ENCODE measurements at regions of chrX and their contacts with region 1.

Region 1: GRCh38 chrX:30713061-30713525 is 59.9 kb downstream of the GK start:
- DNase-seq: peak; percentile 65
- H3K4me3 Mint-ChIP-seq: no peak overlapping the region
- H3K27ac Mint-ChIP-seq: no peak overlapping the region
- H3K4me1 Mint-ChIP-seq: no peaks in the 10 kb centered on the region
- H3K27me3 Mint-ChIP-seq: peaks cover 28% of the 10 kb centered on the region
- CTCF ChIP-seq: peak; percentile 66

Region 2: DNA sequence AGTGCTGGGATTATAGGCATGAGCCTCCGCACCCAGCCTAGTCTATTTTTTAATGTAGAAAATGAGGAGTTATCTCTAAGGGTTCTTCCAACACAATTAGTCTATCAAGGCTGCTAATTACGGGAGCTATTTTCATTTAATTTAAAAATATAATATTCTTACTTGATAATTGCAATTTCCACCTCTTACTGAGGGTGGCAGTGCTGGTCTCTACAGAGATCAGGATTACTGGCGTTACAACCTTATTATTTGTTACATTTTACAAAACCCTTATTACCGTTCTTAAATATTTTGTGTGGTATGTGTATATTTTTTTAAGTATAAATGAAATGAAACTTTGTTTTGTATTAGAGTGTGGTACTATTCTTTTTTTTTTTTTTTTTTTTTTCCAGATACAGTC is 77.5 kb before region 1 on chrX:
- CTCF ChIA-PET with region 1: interaction called, 41 read pairs
- POLR2A ChIA-PET with region 1: no interaction called
- intact Hi-C with region 1: loop called (anchors 1 kb)
- DNase-seq: peak; percentile 25
- H3K4me3 Mint-ChIP-seq: no peak overlapping the region
- H3K27ac Mint-ChIP-seq: no peak overlapping the region
- H3K4me1 Mint-ChIP-seq: no peaks in the 10 kb centered on the region
- H3K27me3 Mint-ChIP-seq: no peaks in the 10 kb centered on the region
- CTCF ChIP-seq: peak; percentile 34

Region 3: DNA sequence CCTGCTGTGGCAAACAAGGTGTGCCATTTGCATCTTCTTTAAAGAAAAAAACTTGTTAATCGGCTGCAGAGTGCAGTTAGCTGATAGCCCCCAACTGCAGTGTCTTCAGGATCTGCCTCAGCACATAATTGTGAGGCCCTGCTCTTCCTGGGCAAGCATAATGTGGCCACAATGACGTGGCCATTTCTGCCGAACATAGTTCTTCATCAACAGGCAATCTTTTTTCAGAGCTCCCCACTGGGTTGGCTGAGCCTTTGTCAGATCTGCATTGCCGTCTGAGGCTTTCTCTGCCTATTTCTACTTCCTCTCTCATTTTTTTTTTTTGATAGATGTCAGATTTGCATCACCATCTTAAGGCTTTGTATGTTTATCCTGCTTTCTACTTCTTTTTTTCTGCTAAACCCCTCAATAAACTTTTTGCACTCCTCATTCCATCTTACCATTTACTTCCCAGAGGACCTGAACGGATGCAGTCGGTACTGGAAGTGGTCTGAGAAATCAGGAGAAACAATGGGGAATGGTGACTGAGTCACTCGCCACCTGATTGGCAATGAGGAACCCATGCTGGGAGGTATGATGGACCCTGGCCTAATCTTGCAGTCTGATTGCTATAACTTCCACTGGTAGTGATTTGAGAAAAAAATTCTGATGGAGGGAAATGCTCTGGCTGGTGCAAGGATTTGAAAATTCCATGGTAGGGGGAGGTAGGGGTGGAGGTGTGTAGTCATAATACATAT is 197.2 kb after region 1 on chrX:
- CTCF ChIA-PET with region 1: no interaction called
- POLR2A ChIA-PET with region 1: no interaction called
- intact Hi-C with region 1: no loop called
- DNase-seq: no peak
- H3K4me3 Mint-ChIP-seq: no peak overlapping the region
- H3K27ac Mint-ChIP-seq: no peak overlapping the region
- H3K4me1 Mint-ChIP-seq: peaks cover 5% of the 10 kb centered on the region
- H3K27me3 Mint-ChIP-seq: no peaks in the 10 kb centered on the region
- CTCF ChIP-seq: no peak

Region 4: DNA sequence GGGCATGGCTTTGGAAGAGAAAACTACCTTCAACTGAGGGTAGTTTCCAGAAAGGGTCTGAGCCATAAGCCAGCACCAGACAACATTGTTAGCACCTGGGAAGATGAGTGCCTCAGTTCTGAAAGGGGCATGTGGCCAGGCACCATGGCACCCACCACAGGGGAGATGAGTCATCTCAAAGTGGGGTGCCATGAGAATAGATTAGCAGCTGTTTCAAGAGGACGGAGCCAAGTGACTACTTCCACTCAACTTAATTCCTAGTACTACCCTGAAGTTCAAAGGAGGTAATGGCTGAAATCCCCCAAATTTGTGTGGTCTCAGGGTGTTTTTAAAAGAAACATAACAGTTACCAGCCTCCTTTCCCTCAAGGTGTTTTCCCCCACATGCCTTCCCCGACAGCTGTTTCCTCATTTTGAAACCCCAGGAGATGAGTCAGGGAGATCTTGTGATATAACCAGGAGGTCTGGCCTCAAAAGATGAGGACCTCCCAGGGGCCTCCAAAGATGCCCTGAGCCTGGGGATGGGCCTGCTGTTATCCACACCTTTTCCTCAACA is 386.5 kb after region 1 on chrX:
- CTCF ChIA-PET with region 1: no interaction called
- POLR2A ChIA-PET with region 1: no interaction called
- intact Hi-C with region 1: no loop called
- DNase-seq: peak; percentile 25
- H3K4me3 Mint-ChIP-seq: no peak overlapping the region
- H3K27ac Mint-ChIP-seq: no peak overlapping the region
- H3K4me1 Mint-ChIP-seq: no peaks in the 10 kb centered on the region
- H3K27me3 Mint-ChIP-seq: no peaks in the 10 kb centered on the region
- CTCF ChIP-seq: no peak

Measured in MCF 10A (cell line).